CD4-positive, alpha-beta memory T cell (primary cell): ENCODE measurements at regions of chr9 and their contacts with region 1.

Region 1: GRCh38 chr9:68584189-68585033 is 43.7 kb upstream of the TMEM252 start:
- DNase-seq: peak; percentile 78 to 83 (median 82)
- H3K4me3 ChIP-seq: no peak overlapping the region
- H3K4me3 Mint-ChIP-seq: no peak overlapping the region
- H3K27ac ChIP-seq: no peak overlapping the region
- H3K27ac Mint-ChIP-seq: no peak overlapping the region
- H3K4me1 ChIP-seq: no peaks in the 10 kb centered on the region
- H3K4me1 Mint-ChIP-seq: peaks cover 0 to 3% (median 0%) of the 10 kb centered on the region in 4 donors
- H3K27me3 ChIP-seq: no peaks in the 10 kb centered on the region
- H3K27me3 Mint-ChIP-seq: peaks cover 0 to 4% of the 10 kb centered on the region in 2 donors

Region 2: GRCh38 chr9:68574150-68574549 is 10.3 kb before region 1 on chr9:
- CTCF ChIA-PET with region 1: interaction called, 11 read pairs
- POLR2A ChIA-PET with region 1: no interaction called
- intact Hi-C with region 1: no loop called
- DNase-seq: no peak
- H3K4me3 ChIP-seq: no peak overlapping the region
- H3K4me3 Mint-ChIP-seq: no peak overlapping the region
- H3K27ac ChIP-seq: no peak overlapping the region
- H3K27ac Mint-ChIP-seq: no peak overlapping the region
- H3K4me1 ChIP-seq: no peaks in the 10 kb centered on the region
- H3K4me1 Mint-ChIP-seq: no peaks in the 10 kb centered on the region
- H3K27me3 ChIP-seq: no peaks in the 10 kb centered on the region
- H3K27me3 Mint-ChIP-seq: peaks cover 16 to 21% of the 10 kb centered on the region in 2 donors

Region 3: DNA sequence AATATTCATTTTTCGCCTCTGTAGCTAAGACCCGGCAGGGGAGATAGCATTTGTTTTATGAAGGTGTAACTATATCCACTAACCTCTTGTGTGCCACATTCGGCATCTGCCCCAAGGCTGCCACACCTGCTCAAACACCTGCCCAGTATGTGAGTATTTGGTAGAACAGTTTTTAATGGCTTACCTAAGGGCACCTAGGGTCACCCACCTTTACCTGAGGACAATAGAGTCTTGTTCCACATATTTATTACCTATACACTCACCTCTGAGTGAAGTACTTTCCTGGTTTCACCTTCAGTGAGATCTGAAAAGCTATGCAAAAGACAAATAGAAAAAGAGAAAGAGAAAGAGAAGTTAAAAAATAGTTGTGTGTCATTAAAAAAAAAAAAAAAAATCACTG is 52.6 kb after region 1 on chr9:
- CTCF ChIA-PET with region 1: no interaction called
- POLR2A ChIA-PET with region 1: no interaction called
- intact Hi-C with region 1: no loop called
- DNase-seq: no peak
- H3K4me3 ChIP-seq: no peak overlapping the region
- H3K4me3 Mint-ChIP-seq: no peak overlapping the region
- H3K27ac ChIP-seq: no peak overlapping the region
- H3K27ac Mint-ChIP-seq: no peak overlapping the region
- H3K4me1 ChIP-seq: no peaks in the 10 kb centered on the region
- H3K4me1 Mint-ChIP-seq: no peaks in the 10 kb centered on the region
- H3K27me3 ChIP-seq: no peaks in the 10 kb centered on the region
- H3K27me3 Mint-ChIP-seq: peaks cover 0 to 6% of the 10 kb centered on the region in 2 donors

Region 4: DNA sequence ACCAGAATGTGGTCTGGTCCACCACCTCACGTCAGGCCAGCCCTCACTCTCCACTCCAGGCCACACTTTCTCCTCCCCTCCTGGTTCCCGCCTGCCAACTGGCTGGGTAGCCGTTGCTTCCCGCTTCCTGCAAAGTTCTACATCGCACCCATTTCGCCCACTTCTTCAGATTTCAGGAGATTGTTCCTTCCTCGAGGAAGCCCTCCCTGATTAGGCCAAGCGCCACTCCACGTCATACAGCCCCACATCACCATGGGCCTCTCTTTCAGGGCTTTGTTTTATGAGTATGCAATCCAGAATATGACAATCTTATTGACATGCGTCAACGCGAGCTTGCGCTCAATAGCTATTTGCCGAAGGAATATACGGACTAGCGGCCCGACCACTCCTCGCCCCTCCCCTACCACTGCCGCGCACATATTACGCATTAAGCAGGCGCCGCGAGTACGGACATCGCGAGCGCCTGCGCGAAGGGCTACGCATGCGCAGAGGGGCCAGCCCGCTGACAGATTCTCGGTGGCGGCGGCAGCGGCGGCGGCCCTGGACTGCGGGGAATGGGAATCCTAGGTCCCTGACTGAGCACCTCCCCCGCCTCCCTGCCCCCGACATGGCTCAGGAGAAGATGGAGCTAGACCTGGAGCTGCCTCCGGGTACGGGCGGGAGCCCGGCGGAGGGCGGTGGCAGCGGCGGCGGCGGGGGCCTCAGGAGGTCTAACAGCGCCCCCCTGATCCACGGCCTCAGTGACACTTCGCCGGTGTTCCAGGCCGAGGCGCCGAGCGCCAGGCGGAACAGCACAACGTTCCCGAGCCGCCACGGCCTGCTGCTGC is 195.4 kb after region 1 on chr9:
- CTCF ChIA-PET with region 1: interaction called, 3 read pairs
- POLR2A ChIA-PET with region 1: no interaction called
- intact Hi-C with region 1: loop called (anchors 5 kb)
- DNase-seq: peak; percentile 94 to 96 (median 94)
- H3K4me3 ChIP-seq: peak overlapping the region; percentile 92 to 100
- H3K4me3 Mint-ChIP-seq: no peak overlapping the region
- H3K27ac ChIP-seq: peak overlapping the region; percentile 85
- H3K27ac Mint-ChIP-seq: no peak overlapping the region
- H3K4me1 ChIP-seq: peaks cover 53% of the 10 kb centered on the region
- H3K4me1 Mint-ChIP-seq: peaks cover 3 to 7% (median 4%) of the 10 kb centered on the region in 4 donors
- H3K27me3 ChIP-seq: no peaks in the 10 kb centered on the region
- H3K27me3 Mint-ChIP-seq: peaks cover 4 to 5% of the 10 kb centered on the region in 2 donors

Region 5: GRCh38 chr9:68949271-68950000 is 365.0 kb after region 1 on chr9:
- CTCF ChIA-PET with region 1: interaction called, 10 read pairs
- POLR2A ChIA-PET with region 1: no interaction called
- intact Hi-C with region 1: loop called (anchors 1 kb)
- DNase-seq: no peak
- H3K4me3 ChIP-seq: no peak overlapping the region
- H3K4me3 Mint-ChIP-seq: no peak overlapping the region
- H3K27ac ChIP-seq: no peak overlapping the region
- H3K27ac Mint-ChIP-seq: no peak overlapping the region
- H3K4me1 ChIP-seq: no peaks in the 10 kb centered on the region
- H3K4me1 Mint-ChIP-seq: no peaks in the 10 kb centered on the region
- H3K27me3 ChIP-seq: no peaks in the 10 kb centered on the region
- H3K27me3 Mint-ChIP-seq: peaks cover 7 to 15% of the 10 kb centered on the region in 2 donors

Region 6: DNA sequence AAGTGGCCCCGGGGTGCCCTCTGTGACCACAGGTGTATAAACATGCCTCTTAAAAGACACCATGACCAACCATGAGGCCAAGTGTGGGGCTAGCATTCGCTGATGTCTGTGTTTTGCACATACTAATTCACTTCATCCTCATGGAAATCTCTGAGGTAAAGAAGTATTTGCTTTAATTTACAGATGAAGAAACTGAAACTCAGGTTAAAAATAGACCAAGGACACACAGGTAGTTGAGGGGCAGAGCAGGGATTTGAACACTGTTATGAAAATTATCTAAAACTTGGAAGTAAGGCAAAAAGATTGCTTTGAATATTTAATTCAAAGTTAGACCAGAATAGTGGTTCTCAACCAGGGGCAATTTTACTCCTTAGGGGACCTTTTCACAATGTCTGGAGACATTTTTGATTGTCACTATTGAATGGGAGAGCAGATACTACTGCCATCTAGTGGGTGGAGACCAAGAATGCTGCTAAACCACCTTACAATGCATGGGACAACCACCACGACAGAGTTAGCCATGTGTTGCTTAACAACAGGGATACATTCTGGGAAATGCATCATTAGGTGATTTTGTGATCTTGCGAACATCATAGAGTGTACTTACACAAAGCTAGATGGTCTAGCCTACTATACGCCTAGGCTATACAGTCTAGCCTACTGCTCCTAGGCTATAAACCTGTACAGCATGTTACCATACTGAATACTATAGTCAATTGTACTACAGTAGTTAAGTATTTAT is 443.1 kb after region 1 on chr9:
- CTCF ChIA-PET with region 1: interaction called, 8 read pairs
- POLR2A ChIA-PET with region 1: no interaction called
- intact Hi-C with region 1: loop called (anchors 1 kb)
- DNase-seq: peak in 4 of 5 donors; percentile 56 to 63 (median 58)
- H3K4me3 ChIP-seq: no peak overlapping the region
- H3K4me3 Mint-ChIP-seq: peak overlapping the region in 4 of 8 donors; percentile 3 to 64 (median 35)
- H3K27ac ChIP-seq: no peak overlapping the region
- H3K27ac Mint-ChIP-seq: peak overlapping the region in 5 of 7 donors; percentile 3 to 41 (median 18)
- H3K4me1 ChIP-seq: peaks cover 49% of the 10 kb centered on the region
- H3K4me1 Mint-ChIP-seq: peaks cover 27 to 55% (median 41%) of the 10 kb centered on the region in 4 donors
- H3K27me3 ChIP-seq: no peaks in the 10 kb centered on the region
- H3K27me3 Mint-ChIP-seq: no peaks in the 10 kb centered on the region

Region 7: GRCh38 chr9:69199769-69200470 is 615.5 kb after region 1 on chr9:
- CTCF ChIA-PET with region 1: no interaction called
- POLR2A ChIA-PET with region 1: no interaction called
- intact Hi-C with region 1: loop called (anchors 10 kb)
- DNase-seq: no peak
- H3K4me3 ChIP-seq: no peak overlapping the region
- H3K4me3 Mint-ChIP-seq: peak overlapping the region in 6 of 8 donors; percentile 5 to 65 (median 37)
- H3K27ac ChIP-seq: no peak overlapping the region
- H3K27ac Mint-ChIP-seq: no peak overlapping the region
- H3K4me1 ChIP-seq: peaks cover 10% of the 10 kb centered on the region
- H3K4me1 Mint-ChIP-seq: peaks cover 12 to 23% (median 18%) of the 10 kb centered on the region in 4 donors
- H3K27me3 ChIP-seq: no peaks in the 10 kb centered on the region
- H3K27me3 Mint-ChIP-seq: no peaks in the 10 kb centered on the region